ENCODE measurements at regions of chr7 and their contacts with region 1.

Region 1: GRCh38 chr7:95527033-95527775 is 41.5 kb downstream of the ASB4 start:
- DNase-seq: no peak
- H3K4me3 ChIP-seq: no peak overlapping the region
- H3K27me3 ChIP-seq: peaks cover 2% of the 10 kb centered on the region; the same call in 1 of the 2 replicates
- CTCF ChIP-seq: peak; percentile 89

Region 2: GRCh38 chr7:95264576-95264927 is 262.7 kb before region 1 on chr7:
- CTCF ChIA-PET with region 1: no interaction called
- POLR2A ChIA-PET with region 1: no interaction called
- DNase-seq: no peak
- H3K4me3 ChIP-seq: no peak overlapping the region
- H3K27me3 ChIP-seq: no peaks in the 10 kb centered on the region
- CTCF ChIP-seq: no peak

Region 3: DNA sequence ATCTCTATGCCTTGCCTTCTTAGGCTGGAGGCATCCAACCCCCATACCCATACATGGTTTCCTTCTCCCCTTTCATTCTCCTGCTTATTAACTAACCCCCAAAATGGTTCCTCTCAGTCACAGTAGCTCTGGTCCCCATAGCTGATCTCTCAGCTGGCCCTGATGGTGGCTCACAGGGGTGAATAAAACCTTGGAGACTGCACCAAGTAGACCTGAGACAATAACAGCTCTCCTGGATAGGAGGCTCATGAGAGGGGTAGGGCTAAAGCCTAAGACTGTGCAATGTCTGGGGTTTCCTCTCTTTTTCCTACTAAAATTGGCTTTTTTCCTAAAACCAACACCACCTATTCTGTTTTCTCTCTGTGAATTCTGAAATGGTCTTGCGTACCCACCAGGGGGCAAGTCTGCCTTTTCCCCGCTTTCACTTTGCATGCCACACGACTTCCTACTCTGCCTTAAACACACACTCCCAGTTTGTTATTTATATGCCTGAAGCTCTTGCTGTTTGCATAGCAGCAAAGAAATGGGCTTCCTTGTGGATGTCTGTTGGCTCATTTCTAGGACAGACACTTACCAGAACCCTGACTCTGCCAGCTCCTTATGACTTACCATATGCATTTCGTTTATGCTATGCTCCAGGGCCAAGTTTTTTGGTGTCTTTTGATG is 184.4 kb before region 1 on chr7:
- CTCF ChIA-PET with region 1: no interaction called
- POLR2A ChIA-PET with region 1: no interaction called
- DNase-seq: no peak
- H3K4me3 ChIP-seq: no peak overlapping the region
- H3K27me3 ChIP-seq: no peaks in the 10 kb centered on the region
- CTCF ChIP-seq: no peak

Region 4: GRCh38 chr7:95539426-95539825 is 12.2 kb after region 1 on chr7:
- CTCF ChIA-PET with region 1: interaction called, 34 read pairs
- POLR2A ChIA-PET with region 1: no interaction called
- DNase-seq: no peak
- H3K4me3 ChIP-seq: no peak overlapping the region
- H3K27me3 ChIP-seq: peaks cover 11% of the 10 kb centered on the region
- CTCF ChIP-seq: no peak

Region 5: DNA sequence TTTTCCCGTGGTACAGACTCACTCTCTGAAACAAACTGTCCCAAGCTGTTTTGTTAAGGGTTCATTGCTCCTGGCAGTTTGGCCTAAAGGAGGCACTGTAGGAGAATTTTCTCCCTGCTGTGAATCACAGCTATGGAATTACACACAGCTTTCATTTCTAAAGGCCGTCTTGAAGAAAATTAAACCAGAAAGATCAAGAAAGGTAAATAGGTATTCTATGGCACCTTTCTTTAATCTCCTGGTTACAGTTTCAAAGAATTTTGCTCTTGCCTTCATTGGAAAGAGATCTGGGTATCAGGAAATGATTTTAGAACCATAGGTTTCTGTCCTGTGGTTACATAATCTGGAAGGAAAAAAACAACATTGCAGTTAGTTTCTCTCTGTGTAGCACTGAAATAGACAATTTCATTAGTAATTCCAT is 17.9 kb after region 1 on chr7:
- CTCF ChIA-PET with region 1: interaction called, 34 read pairs
- POLR2A ChIA-PET with region 1: no interaction called
- DNase-seq: peak; percentile 14
- H3K4me3 ChIP-seq: peak overlapping the region; percentile 13
- H3K27me3 ChIP-seq: peaks cover 5% of the 10 kb centered on the region
- CTCF ChIP-seq: peak; percentile 88

Region 6: GRCh38 chr7:95684037-95684436 is 156.8 kb after region 1 on chr7:
- CTCF ChIA-PET with region 1: interaction called, 591 read pairs
- POLR2A ChIA-PET with region 1: no interaction called
- DNase-seq: no peak
- H3K4me3 ChIP-seq: no peak overlapping the region
- H3K27me3 ChIP-seq: peaks cover 2% of the 10 kb centered on the region; the same call in 1 of the 2 replicates
- CTCF ChIP-seq: peak; percentile 53

Region 7: DNA sequence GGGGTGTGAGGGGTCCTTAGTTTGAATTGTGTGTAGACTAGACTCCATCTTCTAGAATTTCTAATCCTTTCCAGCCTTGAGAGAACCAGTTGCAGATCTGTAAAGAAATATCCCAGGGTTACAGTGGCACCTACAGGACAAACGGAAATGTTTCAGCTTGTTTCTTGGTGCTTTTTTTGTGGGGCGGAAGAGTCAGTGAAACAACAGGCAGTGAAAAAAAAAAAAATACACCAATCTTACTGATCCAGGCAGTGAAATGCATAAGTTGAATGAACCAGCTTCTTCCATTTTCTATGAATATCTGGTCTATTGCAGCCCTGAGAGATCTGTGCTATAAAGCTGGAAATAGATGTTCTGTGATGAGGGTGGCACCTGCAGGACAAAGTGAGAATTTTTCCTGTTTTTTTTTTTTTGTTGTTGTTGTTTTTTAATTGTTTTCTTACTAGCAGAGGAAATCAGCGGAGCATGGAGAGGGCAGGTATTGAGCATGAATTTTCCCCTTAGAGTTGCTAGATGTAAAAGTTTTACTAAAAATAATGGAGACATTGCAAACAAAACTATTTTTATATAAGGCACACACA is 163.3 kb after region 1 on chr7:
- CTCF ChIA-PET with region 1: interaction called, 591 read pairs
- POLR2A ChIA-PET with region 1: no interaction called
- DNase-seq: no peak
- H3K4me3 ChIP-seq: no peak overlapping the region
- H3K27me3 ChIP-seq: peaks cover 2% of the 10 kb centered on the region; the same call in 1 of the 2 replicates
- CTCF ChIP-seq: peak; percentile 58